OCI-LY7 (cell line): ENCODE measurements at regions of chr12 and their contacts with region 1.

Region 1: GRCh38 chr12:118061011-118061875 is at the start of gene WSB2:
- DNase-seq: peak; percentile 53
- H3K4me3 ChIP-seq: peak within 1 kb of the TSS; percentile 78
- H3K27ac ChIP-seq: peak within 1 kb of the TSS; percentile 40
- H3K4me1 ChIP-seq: peaks cover 48% of the 10 kb centered on the region
- CTCF ChIP-seq: no peak
- total RNA-seq, gene WSB2: 34.4 and 36.0 TPM in 2 replicates

Region 2: DNA sequence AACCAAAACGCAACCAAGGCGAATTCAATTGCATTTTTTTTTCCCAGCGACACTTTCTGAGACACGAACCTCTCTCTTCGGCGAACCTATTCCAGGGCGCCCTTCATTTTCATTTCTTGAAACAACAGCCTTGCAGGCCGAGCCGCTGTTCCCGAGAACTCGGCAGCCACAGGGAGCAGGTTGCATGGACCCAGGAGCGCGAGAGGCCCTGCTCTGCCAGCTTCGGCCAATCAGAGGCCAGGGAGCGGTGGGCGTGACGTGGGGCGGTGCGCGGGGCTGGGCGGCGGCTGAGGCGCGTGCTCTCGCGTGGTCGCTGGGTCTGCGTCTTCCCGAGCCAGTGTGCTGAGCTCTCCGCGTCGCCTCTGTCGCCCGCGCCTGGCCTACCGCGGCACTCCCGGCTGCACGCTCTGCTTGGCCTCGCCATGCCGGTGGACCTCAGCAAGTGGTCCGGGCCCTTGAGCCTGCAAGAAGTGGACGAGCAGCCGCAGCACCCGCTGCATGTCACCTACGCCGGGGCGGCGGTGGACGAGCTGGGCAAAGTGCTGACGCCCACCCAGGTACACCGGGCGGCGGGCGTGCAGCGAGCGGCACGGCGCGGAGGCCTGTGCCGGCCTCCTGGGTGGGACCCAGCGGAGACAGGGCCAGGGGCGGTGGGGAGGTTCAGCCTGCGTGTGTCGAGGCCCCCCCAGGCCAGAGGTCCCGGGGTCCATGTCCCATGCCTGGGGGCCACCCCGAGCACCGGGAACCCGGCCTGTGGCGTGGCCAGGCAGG is 74.7 kb after region 1 on chr12 and contains the start of gene PEBP1:
- CTCF ChIA-PET with region 1: no interaction called
- POLR2A ChIA-PET with region 1: interaction called, 5 read pairs
- intact Hi-C with region 1: loop called (anchors 5 kb)
- DNase-seq: peak; percentile 90
- H3K4me3 ChIP-seq: peak within 1 kb of the TSS; percentile 96
- H3K27ac ChIP-seq: peak within 1 kb of the TSS; percentile 14
- H3K4me1 ChIP-seq: peaks cover 18% of the 10 kb centered on the region
- CTCF ChIP-seq: no peak
- total RNA-seq, gene PEBP1: 128 and 135 TPM in 2 replicates

Region 3: DNA sequence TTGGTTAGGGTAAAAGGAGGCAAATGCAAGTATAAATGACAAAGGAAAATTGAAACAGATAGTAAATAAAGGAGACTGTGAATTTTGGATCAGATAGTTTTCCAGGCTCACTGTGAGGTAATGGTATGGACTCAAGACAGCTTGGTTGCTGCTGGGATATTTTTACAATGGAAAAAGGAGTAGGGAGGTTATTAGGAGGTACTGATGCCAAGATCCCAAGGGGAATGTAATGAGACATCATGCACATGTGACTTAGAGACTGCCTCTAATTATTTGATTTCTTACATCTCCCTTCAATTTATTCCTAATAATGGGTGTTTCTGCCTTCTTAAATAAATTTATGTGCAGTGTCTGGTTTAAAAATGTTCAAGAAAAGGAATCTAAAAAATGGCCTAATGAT is 254.6 kb after region 1 on chr12:
- CTCF ChIA-PET with region 1: interaction called, 11 read pairs
- POLR2A ChIA-PET with region 1: no interaction called
- intact Hi-C with region 1: no loop called
- DNase-seq: no peak
- H3K4me3 ChIP-seq: no peak overlapping the region
- H3K27ac ChIP-seq: no peak overlapping the region
- H3K4me1 ChIP-seq: peaks cover 16% of the 10 kb centered on the region
- CTCF ChIP-seq: no peak